Caco-2 (cell line): ENCODE measurements at regions of chr5 and their contacts with region 1.

Region 1: DNA sequence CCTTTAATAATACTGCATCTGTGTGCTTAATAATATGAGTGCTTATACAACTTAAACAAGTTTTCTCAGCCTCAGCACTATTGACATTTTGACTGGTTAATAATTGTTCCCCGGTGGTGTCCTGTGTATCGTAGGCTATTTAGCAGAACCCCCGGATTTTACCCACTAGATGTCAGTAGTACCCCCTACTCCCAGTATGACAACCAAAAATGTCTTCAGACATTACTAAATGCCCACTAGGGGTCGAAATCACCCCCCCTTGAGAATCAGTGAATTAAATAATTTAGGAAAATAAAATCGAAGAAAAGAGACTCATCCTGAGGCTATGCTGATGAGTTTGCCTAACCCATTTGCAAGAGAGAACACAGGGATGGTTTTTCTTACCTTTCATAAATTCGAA is 166.3 kb downstream of the ATP10B start:
- DNase-seq: peak in 1 of 2 experiments; percentile 66
- H3K4me3 ChIP-seq: no peak overlapping the region
- H3K4me3 Mint-ChIP-seq: no peak overlapping the region
- H3K27ac Mint-ChIP-seq: no peak overlapping the region
- H3K4me1 ChIP-seq: no peaks in the 10 kb centered on the region
- H3K4me1 Mint-ChIP-seq: peaks cover 8% of the 10 kb centered on the region
- H3K27me3 ChIP-seq: no peaks in the 10 kb centered on the region
- H3K27me3 Mint-ChIP-seq: no peaks in the 10 kb centered on the region
- CTCF ChIP-seq: peak; percentile 76 to 79

Region 2: GRCh38 chr5:160470437-160471361 is 215.0 kb before region 1 on chr5:
- CTCF ChIA-PET with region 1: no interaction called
- POLR2A ChIA-PET with region 1: no interaction called
- intact Hi-C with region 1: no loop called
- DNase-seq: no peak
- H3K4me3 ChIP-seq: no peak overlapping the region
- H3K4me3 Mint-ChIP-seq: no peak overlapping the region
- H3K27ac Mint-ChIP-seq: no peak overlapping the region
- H3K4me1 ChIP-seq: peaks cover 39% of the 10 kb centered on the region
- H3K4me1 Mint-ChIP-seq: peaks cover 22% of the 10 kb centered on the region
- H3K27me3 ChIP-seq: no peaks in the 10 kb centered on the region
- H3K27me3 Mint-ChIP-seq: no peaks in the 10 kb centered on the region
- CTCF ChIP-seq: no peak

Region 3: GRCh38 chr5:160787240-160787639 is 101.5 kb after region 1 on chr5:
- CTCF ChIA-PET with region 1: no interaction called
- POLR2A ChIA-PET with region 1: no interaction called
- intact Hi-C with region 1: loop called (anchors 1 kb)
- DNase-seq: peak; percentile 37 to 40
- H3K4me3 ChIP-seq: no peak overlapping the region
- H3K4me3 Mint-ChIP-seq: no peak overlapping the region
- H3K27ac Mint-ChIP-seq: no peak overlapping the region
- H3K4me1 ChIP-seq: no peaks in the 10 kb centered on the region
- H3K4me1 Mint-ChIP-seq: peaks cover 9% of the 10 kb centered on the region
- H3K27me3 ChIP-seq: no peaks in the 10 kb centered on the region
- H3K27me3 Mint-ChIP-seq: peaks cover 3% of the 10 kb centered on the region
- CTCF ChIP-seq: peak; percentile 54 to 67

Region 4: DNA sequence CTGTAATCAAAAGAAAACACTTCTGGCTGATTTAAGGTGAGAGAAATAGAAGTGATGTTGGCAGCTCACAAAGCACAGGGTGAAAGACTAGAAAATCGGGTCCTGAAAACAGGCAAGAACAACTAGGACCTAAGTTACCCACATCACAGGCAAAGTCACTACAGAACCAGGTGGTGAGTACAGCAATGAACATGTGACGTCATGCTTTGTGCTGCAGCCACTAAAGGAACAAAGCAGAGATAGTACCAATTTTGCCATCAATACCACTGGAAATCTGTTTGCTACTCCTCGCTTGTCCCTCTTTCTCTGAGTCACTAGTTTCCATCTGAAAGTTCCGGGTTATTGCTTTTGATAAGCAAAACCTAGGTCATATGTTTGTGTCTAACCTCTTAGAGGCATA is 534.1 kb after region 1 on chr5:
- CTCF ChIA-PET with region 1: no interaction called
- POLR2A ChIA-PET with region 1: no interaction called
- intact Hi-C with region 1: loop called (anchors 10 kb)
- DNase-seq: no peak
- H3K4me3 ChIP-seq: no peak overlapping the region
- H3K4me3 Mint-ChIP-seq: no peak overlapping the region
- H3K27ac Mint-ChIP-seq: no peak overlapping the region
- H3K4me1 ChIP-seq: no peaks in the 10 kb centered on the region
- H3K4me1 Mint-ChIP-seq: no peaks in the 10 kb centered on the region
- H3K27me3 ChIP-seq: no peaks in the 10 kb centered on the region
- H3K27me3 Mint-ChIP-seq: peaks cover 8% of the 10 kb centered on the region
- CTCF ChIP-seq: no peak